ENCODE measurements at regions of chr5 and their contacts with region 1.

Region 1: GRCh38 chr5:170638454-170639220 is 134.8 kb downstream of the KCNIP1 start:
- DNase-seq: peak; percentile 71
- ATAC-seq: peak; percentile 88
- H3K4me3 ChIP-seq: no peak overlapping the region
- H3K27ac ChIP-seq: no peak overlapping the region
- H3K4me1 ChIP-seq: peaks cover 8% of the 10 kb centered on the region
- H3K27me3 ChIP-seq: 0 out of 2 replicates have a peak, but pooled peaks cover 5% of the 10 kb centered on the region
- CTCF ChIP-seq: peak; percentile 76

Region 2: GRCh38 chr5:170791325-170791954 is 152.8 kb after region 1 on chr5:
- CTCF ChIA-PET with region 1: interaction called, 6 read pairs
- POLR2A ChIA-PET with region 1: no interaction called
- intact Hi-C with region 1: loop called (anchors 5 kb)
- DNase-seq: peak; percentile 64
- ATAC-seq: peak; percentile 77
- H3K4me3 ChIP-seq: no peak overlapping the region
- H3K27ac ChIP-seq: no peak overlapping the region
- H3K4me1 ChIP-seq: no peaks in the 10 kb centered on the region
- H3K27me3 ChIP-seq: no peaks in the 10 kb centered on the region
- CTCF ChIP-seq: peak; percentile 69